Posterior vena cava (tissue), 2 donors: ENCODE measurements at regions of chr10 and their contacts with region 1.

Region 1: GRCh38 chr10:123146013-123146893 is 1.7 kb upstream of the HMX2 start:
- DNase-seq: no peak

Region 2: DNA sequence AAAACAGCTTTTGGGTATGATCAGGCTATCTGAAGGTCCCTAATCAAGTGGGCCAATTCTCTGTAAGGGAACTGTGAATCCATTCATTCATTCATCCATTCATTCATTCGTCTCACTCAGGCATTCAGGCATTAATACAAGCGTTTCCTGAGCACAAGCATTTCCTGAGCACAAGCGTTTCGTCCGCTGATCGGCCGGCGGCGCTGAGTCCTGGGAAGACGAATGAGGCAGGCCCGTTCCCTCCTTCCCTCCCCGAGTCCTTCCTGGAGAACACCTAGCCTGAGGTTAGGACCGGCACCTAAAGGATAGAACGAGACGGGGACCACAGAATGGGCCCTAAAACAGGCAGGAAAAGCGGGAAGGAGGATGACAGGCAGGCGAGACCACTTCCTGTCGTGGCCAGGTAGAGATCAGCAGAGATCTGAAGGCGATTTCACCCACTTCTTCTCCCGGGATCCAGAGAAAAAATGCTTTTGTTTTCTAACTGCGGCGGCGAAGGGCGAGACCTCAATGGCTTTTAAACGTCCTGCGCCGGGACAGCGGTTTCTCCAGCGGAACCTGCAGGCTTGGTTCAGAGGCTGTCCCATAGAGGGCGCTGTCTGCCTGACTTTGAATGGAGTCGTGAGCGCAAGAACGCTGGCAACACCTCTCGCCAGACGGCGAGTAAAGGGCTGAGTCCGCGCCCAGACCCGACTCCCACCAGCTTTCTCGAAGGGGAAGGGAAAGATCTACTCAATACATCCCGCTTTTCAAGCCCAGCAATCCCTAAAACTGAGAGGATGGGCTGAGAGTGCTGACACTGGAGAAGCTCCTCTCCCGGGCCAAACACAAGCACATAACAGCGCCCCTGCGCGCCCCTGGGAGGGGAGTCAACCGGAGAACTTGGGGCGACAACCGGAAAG is 13.4 kb before region 1 on chr10:
- intact Hi-C with region 1: loop called in 1 of 2 experiments (anchors 1 kb)
- DNase-seq: peak; percentile 95